ENCODE measurements at regions of chr2 and their contacts with region 1.

Region 1: DNA sequence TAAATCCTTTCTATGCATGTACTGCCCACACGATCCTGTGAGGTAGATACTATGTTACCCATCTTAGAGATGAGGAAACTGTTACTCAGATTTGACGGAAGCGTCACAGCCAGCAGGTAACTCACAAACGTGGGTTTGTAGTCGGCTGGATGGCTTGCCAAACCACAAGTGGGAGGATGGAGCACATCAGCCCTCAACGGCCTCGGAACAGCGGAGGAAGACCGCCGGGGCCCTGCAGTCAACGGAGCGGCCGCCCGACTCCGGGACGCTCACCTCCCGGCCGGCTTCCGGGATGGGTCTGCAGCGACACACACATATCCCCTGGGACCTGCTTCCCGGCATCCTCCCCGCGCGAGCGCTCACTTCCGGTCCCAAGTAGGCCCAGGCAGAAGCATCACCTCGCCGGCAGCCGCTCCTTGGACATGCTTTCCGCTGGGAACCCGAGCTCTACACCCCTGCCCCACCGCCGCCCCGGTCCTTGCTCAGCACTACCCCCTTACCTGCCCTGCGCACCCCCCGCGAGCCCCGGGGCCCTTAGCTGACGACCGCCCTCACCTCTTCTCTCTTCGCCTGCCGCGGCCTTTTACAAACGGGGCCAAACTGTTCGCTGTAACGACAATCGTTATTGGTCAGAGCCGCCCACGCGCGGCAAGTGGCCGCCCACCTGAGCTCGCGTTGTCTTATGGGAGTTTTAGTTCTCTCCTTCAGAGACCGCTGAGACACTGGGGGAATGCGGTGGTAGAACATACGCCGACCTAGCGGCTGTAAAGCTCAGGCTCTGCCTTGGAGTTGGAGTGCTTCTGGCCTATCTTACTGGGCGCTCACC is at the start of gene C2orf42:
- DNase-seq: peak; percentile 96
- H3K4me3 ChIP-seq: peak within 1 kb of the TSS; percentile 70
- H3K27ac ChIP-seq: peak within 1 kb of the TSS; percentile 88
- H3K4me1 ChIP-seq: no peaks in the 10 kb centered on the region
- H3K27me3 ChIP-seq: no peaks in the 10 kb centered on the region
- CTCF ChIP-seq: no peak
- total RNA-seq, gene C2orf42: 7.1 to 11.4 TPM

Region 2: DNA sequence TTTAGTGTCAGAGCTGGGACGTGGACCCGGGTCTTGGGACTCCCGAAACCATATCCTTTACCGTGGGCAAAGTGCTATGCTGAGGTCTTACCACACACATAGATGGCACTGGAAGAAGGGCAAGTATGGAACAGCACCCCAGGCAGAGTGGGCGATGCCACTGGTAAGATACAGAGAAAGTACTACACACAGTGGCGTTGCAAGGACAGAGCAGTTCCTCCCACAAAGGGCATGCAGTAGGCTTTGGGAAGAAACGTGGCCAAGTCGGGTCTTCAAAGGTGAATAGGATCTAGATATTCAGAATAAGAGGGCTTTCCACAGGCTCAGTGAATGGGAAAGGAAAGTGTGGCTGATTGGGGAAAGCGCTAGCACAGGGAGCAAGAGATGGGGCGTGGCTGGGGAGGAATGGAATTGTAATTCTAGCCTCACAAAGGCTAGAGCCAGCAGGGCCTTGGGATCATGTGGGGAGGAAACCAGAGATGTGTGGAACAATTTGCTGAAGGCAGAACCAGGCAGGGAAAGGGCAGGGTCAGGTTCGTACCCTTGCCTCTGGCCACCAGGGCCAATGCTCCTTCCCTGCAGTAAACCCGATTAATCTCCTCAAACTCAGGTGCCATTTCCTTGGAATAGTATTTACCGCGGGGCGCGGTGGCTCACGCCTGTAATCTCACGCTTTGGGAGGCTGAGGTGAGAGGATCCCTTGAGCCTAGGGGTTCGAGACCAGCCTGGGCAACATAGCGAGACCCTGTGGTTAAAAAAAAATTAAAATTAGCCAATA is 67.4 kb before region 1 on chr2:
- intact Hi-C with region 1: no loop called
- DNase-seq: peak; percentile 72
- H3K4me3 ChIP-seq: no peak overlapping the region
- H3K27ac ChIP-seq: peak overlapping the region; percentile 95
- H3K4me1 ChIP-seq: peaks cover 6% of the 10 kb centered on the region
- H3K27me3 ChIP-seq: no peaks in the 10 kb centered on the region
- CTCF ChIP-seq: no peak

Region 3: DNA sequence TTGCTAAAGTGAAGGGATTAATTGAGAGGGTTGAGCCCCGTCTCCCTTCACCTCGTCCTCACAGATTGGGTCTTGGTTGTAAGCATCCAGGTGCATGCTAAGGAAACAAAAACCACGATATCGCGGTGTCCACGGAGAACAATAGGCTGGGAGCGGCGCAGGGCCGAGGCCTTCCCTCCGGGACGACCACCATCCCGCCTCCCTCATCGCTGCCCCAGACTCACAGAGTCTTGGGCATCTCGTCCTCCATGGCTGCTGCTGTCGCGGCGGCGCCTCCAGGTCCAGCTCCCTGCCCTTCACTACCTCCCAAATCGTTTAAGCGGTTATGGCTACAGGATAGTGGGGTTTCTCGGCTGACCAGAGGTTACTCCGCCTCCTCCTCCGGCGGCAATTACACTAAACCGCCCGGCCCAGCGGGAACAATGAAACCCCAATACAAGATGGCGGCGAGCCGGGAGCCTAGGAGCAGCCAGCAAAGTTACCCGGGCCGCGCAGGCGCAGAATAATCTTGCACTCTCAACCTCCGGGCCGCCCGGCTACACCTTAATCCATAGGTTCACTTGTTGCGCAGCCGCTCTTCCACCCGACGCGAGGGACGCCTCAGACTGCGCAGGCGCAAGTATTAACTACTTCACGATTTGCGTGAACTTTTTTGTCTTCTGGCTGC is 57.7 kb after region 1 on chr2 and contains the start of gene TIA1:
- intact Hi-C with region 1: no loop called
- DNase-seq: peak; percentile 99
- H3K4me3 ChIP-seq: peak within 1 kb of the TSS; percentile 77
- H3K27ac ChIP-seq: peak within 1 kb of the TSS; percentile 98
- H3K4me1 ChIP-seq: no peaks in the 10 kb centered on the region
- H3K27me3 ChIP-seq: no peaks in the 10 kb centered on the region
- CTCF ChIP-seq: no peak
- total RNA-seq, gene TIA1: 86.8 to 89.2 TPM

Region 4: DNA sequence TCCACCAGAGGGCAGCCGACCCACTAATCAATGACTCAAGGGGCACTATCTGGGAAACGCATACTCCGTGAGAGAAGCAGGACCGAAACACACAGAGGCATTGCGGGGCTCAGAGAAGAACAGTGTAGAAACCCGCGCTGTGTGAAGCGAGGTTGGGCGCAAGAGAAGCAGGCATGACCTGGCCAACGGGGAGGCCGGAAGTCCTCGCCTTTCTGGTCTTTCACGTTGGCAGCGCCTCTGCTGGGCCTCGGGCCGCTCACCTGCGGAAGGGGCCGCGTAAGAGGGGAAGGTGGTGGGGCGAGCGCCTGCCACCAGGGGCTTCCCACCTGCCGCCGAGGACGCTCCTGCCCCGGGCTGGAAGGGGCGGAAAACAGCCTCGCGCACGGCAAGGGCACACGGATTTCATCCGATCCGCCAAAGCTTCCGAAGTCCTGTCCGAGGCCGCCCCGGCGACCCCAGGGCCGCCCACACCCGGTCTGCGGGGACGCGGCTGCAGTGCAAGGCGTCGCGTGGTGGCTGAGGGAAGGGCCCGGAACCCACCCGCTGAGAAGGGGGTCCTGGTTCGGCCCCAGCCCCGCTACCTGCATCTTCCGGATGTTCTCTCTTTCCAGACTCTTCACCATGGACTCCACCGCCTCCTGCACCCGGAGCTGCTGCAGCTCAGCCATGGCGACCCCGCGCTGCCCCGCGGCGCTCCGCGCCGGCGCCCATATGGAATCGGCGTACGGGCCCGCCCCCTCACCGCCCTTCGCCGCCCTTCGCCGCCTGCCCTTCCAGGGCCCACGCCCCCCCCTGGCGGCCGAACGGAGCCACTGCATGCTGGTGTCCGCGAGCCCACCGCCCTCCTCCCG is 110.9 kb after region 1 on chr2 and contains the start of gene FAM136A:
- intact Hi-C with region 1: loop called (anchors 10 kb)
- DNase-seq: peak; percentile 86
- H3K4me3 ChIP-seq: peak within 1 kb of the TSS; percentile 97
- H3K27ac ChIP-seq: peak within 1 kb of the TSS; percentile 90
- H3K4me1 ChIP-seq: peaks cover 4% of the 10 kb centered on the region
- H3K27me3 ChIP-seq: no peaks in the 10 kb centered on the region
- CTCF ChIP-seq: peak; percentile 97
- total RNA-seq, gene FAM136A: 44.0 to 48.4 TPM

Region 5: DNA sequence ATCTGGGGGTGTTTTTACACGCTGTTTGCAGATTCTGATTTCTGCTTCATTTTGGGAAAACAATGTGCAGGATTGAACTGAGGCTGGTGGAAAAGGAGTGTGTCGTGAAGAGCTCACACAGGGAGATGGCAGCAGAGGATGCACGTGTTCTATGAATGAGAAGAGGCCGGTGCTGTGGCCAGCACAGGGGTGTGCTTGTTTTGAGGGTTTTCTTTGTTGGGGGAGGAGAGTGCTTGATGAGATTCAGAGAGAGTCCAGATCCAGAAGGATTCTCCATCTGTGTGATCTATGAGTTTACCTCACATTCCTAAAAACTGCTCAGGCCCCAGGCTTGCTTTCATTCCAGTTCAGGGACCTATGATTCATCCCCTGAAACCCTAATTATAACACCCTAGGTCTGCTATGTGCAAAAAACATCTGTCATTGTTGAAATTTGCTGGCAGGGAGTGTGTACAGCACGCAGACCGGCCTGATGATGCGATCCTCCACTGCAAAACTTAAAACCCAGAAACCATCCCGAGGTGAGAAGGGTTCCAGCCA is 350.9 kb after region 1 on chr2:
- intact Hi-C with region 1: no loop called
- DNase-seq: no peak
- H3K4me3 ChIP-seq: no peak overlapping the region
- H3K27ac ChIP-seq: no peak overlapping the region
- H3K4me1 ChIP-seq: no peaks in the 10 kb centered on the region
- H3K27me3 ChIP-seq: no peaks in the 10 kb centered on the region
- CTCF ChIP-seq: no peak